Lower leg skin (tissue), 4 donors: ENCODE measurements at regions of chr4 and their contacts with region 1.

Region 1: GRCh38 chr4:94378047-94378446 is 35.4 kb upstream of the HPGDS start:
- DNase-seq: no peak
- H3K4me3 ChIP-seq: no peak overlapping the region
- CTCF ChIP-seq: no peak
- POLR2A ChIP-seq: no peak

Region 2: GRCh38 chr4:93127489-93127888 is 1250.6 kb before region 1 on chr4:
- intact Hi-C with region 1: loop called (anchors 10 kb)
- DNase-seq: no peak
- H3K4me3 ChIP-seq: no peak overlapping the region
- CTCF ChIP-seq: no peak
- POLR2A ChIP-seq: no peak